ENCODE measurements at regions of chr4 and their contacts with region 1.

Region 1: DNA sequence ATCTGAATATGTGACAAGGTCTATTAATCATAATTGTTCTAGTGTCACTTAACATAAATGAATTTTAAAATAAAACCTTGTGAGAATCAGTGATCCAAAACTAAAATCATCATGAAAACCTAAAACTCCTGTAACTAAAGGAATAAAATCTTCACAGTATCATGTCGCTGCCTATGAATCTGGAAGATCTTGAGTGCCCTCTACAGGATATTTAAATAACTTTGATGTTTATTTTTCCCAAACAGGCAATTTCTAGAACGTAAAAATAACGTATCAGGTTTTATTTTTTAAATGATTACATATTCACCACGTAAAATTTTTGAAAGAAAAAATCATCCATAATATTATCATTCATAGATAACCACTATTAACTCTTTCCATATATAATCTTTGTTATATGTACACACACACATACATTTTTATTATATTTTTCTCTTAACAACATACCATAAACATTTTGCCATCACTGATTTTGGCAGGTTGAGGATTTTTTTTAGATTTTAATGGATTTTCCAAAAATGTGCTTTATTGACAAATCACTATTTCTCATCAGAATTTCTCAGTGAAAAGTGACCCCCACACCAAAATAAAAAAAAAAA is 79.6 kb downstream of the COMMD8 start:
- DNase-seq: no peak
- ATAC-seq: no peak
- H3K4me3 ChIP-seq: no peak overlapping the region
- H3K27ac ChIP-seq: no peak overlapping the region
- H3K4me1 ChIP-seq: peaks cover 0 to 3% (median 0%) of the 10 kb centered on the region in 9 donors
- H3K27me3 ChIP-seq: no peaks in the 10 kb centered on the region
- CTCF ChIP-seq: peak; percentile 18 to 72 (median 56)

Region 2: DNA sequence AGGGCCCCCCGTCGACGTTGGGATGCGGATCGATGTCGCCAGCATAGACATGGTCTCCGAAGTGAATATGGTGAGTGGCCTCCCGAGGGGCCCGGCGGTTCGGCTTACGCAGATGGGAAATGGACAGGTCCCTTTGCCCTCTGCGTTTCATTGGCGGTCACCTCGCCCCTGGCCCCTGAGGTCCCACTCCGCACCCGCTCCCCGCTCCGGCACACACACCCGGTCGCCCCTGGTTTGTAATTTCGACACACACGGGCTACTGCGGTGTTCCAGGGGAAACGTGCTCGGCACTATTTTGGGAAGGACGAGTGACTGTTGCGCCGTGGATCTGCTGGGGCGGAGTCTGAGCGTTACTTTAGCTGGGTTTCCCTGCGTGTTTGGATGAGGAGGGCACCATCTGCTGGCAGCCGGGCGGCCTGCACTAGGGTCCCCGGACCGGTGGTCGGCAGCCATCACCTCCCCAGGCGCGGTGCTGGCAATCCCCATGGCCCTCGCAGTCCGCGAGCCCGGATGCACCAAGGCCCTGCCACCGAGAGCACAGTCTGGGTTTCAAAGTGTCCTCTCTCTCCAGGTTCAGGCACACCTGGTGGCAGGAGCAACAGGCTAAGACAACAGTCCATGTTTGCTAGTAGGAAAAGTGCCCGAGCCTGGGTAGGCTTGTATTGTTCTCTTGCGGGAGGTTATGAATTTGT is 351.4 kb before region 1 on chr4:
- intact Hi-C with region 1: loop called in 1 of 10 experiments (anchors 10 kb)
- DNase-seq: peak; percentile 59 to 60
- ATAC-seq: peak; percentile 83 to 98 (median 96)
- H3K4me3 ChIP-seq: peak overlapping the region; percentile 9 to 60 (median 53)
- H3K27ac ChIP-seq: peak overlapping the region in 6 of 10 donors; percentile 5 to 80 (median 75)
- H3K4me1 ChIP-seq: peaks cover 0 to 15% (median 0%) of the 10 kb centered on the region in 9 donors
- H3K27me3 ChIP-seq: peaks cover 0 to 59% (median 15%) of the 10 kb centered on the region in 7 donors
- CTCF ChIP-seq: peak; percentile 39 to 77 (median 71)